ENCODE measurements at regions of chr10 and their contacts with region 1.

Region 1: DNA sequence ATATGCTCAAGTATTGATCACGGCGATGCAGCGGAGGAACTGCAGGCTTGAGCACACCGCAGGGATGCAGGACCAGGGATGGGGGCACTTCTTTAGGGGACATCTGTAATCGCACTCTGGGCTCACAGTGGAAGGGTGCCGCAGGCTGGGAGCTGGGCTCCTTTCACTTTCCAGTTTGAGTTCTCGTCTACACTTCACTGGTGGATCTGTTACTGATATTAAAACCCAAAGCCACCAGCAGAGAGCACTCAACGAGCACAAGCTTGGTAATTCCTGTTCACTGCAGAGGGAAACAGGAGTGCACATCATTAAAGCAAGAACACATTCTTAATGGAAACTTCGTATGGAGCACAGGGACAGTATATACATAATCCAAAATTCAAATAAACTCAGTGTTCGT is 91.3 kb downstream of the PARD3 start:
- DNase-seq: peak; percentile 76
- H3K4me3 ChIP-seq: no peak overlapping the region
- H3K27ac ChIP-seq: no peak overlapping the region
- H3K4me1 ChIP-seq: peaks cover 8% of the 10 kb centered on the region
- H3K27me3 ChIP-seq: no peaks in the 10 kb centered on the region
- CTCF ChIP-seq: peak; percentile 26 to 47
- POLR2A ChIP-seq: no peak

Region 2: DNA sequence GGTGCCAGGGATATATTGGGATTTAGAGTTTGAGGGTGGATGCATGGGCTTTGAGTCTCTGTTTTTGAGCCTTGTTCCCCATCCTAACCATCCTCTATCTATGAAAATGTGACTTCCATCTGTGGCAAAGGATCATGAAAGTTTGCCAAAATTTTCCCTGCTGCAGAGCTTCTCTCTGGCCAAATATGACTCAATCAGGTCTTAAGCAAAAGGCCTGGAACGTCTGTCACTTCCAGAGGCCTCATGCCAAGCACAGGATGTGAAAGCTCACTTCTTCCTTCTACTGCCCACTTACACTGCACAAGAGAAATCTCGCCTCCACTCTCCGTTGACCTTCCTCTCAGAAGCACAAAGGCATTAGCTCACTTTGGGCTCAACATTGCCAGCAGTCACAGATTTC is 692.4 kb before region 1 on chr10:
- CTCF ChIA-PET with region 1: no interaction called
- POLR2A ChIA-PET with region 1: no interaction called
- dilution Hi-C with region 1: no loop called
- intact Hi-C with region 1: no loop called
- DNase-seq: no peak
- H3K4me3 ChIP-seq: no peak overlapping the region
- H3K27ac ChIP-seq: no peak overlapping the region
- H3K4me1 ChIP-seq: no peaks in the 10 kb centered on the region
- H3K27me3 ChIP-seq: no peaks in the 10 kb centered on the region
- CTCF ChIP-seq: no peak
- POLR2A ChIP-seq: no peak

Region 3: GRCh38 chr10:34682580-34682979 is 41.2 kb before region 1 on chr10:
- CTCF ChIA-PET with region 1: interaction called, 11 read pairs
- POLR2A ChIA-PET with region 1: no interaction called
- dilution Hi-C with region 1: no loop called
- intact Hi-C with region 1: no loop called
- DNase-seq: no peak
- H3K4me3 ChIP-seq: no peak overlapping the region
- H3K27ac ChIP-seq: no peak overlapping the region
- H3K4me1 ChIP-seq: no peaks in the 10 kb centered on the region
- H3K27me3 ChIP-seq: no peaks in the 10 kb centered on the region
- CTCF ChIP-seq: no peak
- POLR2A ChIP-seq: no peak

Region 4: GRCh38 chr10:34815185-34816084 is 91.7 kb after region 1 on chr10 and contains the start of gene PARD3:
- CTCF ChIA-PET with region 1: interaction called, 14 read pairs
- POLR2A ChIA-PET with region 1: no interaction called
- dilution Hi-C with region 1: no loop called
- intact Hi-C with region 1: no loop called
- DNase-seq: peak; percentile 54
- H3K4me3 ChIP-seq: peak within 1 kb of the TSS; percentile 53 to 92 (median 65)
- H3K27ac ChIP-seq: peak within 1 kb of the TSS; percentile 50
- H3K4me1 ChIP-seq: peaks cover 14% of the 10 kb centered on the region
- H3K27me3 ChIP-seq: peaks cover 3 to 6% of the 10 kb centered on the region in 2 experiments
- CTCF ChIP-seq: no peak
- POLR2A ChIP-seq: no peak
- total RNA-seq, gene PARD3: 20.2 and 24.1 TPM in 2 replicates

Region 5: DNA sequence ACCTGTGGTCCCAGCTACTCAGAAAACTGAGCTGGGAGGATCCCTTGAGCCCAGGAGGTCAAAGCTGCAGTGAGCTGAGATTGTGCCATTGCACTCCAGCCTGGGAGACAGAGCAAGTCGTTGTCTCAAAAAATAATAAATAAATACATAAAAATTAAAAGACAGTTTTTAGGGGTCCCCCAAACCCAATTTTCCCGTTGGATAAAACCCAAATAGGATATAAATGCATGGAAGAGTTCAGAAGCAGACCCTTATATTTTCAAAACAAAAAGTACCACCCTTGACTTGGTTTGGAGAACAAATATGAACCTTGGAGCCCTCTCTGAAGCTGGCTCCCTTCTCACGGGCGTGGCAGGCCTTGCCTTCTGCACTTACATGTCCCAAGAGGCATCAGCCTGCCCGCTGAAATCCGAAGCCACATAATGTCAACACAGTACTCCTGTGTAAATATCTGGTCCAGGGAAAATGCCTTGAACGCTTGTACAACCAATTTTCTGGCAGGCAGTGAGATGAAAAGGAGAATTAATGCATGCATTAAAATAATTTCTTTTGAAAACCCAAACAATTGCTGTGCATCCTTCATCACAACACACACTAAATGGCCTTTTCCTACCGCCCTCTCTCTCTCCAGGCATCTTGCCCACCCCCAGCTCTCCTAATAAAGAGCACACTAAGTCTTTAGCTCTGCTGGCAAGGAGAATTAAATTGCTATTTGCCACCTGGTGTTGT is 137.7 kb after region 1 on chr10:
- CTCF ChIA-PET with region 1: no interaction called
- POLR2A ChIA-PET with region 1: no interaction called
- dilution Hi-C with region 1: no loop called
- intact Hi-C with region 1: no loop called
- DNase-seq: no peak
- H3K4me3 ChIP-seq: no peak overlapping the region
- H3K27ac ChIP-seq: no peak overlapping the region
- H3K4me1 ChIP-seq: no peaks in the 10 kb centered on the region
- H3K27me3 ChIP-seq: peaks cover 6% of the 10 kb centered on the region in 2 experiments
- CTCF ChIP-seq: no peak
- POLR2A ChIP-seq: no peak

Region 6: DNA sequence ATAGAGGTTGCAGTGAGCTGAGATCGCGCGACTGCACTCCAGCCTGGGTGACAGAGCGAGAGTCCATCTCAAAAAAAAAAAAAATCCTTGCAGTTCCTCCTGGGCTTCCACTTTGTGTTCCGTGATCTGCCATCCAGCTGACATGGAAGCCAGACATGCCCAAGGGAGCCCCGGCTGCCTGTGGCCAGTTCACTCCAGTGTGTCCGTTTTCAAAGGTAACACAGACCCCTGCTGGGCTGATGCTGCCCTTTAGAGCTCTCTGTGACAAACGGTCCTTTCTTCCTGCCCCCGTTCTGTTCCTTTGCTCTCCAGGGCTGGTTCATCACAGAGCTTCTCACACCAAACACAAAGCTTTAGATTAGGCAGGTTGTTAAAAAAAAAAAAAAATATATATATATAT is 235.6 kb after region 1 on chr10:
- CTCF ChIA-PET with region 1: interaction called, 15 read pairs
- POLR2A ChIA-PET with region 1: no interaction called
- dilution Hi-C with region 1: no loop called
- intact Hi-C with region 1: no loop called
- DNase-seq: no peak
- H3K4me3 ChIP-seq: no peak overlapping the region
- H3K27ac ChIP-seq: no peak overlapping the region
- H3K4me1 ChIP-seq: no peaks in the 10 kb centered on the region
- H3K27me3 ChIP-seq: no peaks in the 10 kb centered on the region
- CTCF ChIP-seq: no peak
- POLR2A ChIP-seq: no peak

Region 7: GRCh38 chr10:35172574-35172973 is 448.8 kb after region 1 on chr10:
- CTCF ChIA-PET with region 1: no interaction called
- POLR2A ChIA-PET with region 1: no interaction called
- dilution Hi-C with region 1: no loop called
- intact Hi-C with region 1: no loop called
- DNase-seq: peak; percentile 98
- H3K4me3 ChIP-seq: peak overlapping the region in 1 of 3 experiments; percentile 18
- H3K27ac ChIP-seq: peak overlapping the region; percentile 65
- H3K4me1 ChIP-seq: peaks cover 17% of the 10 kb centered on the region
- H3K27me3 ChIP-seq: no peaks in the 10 kb centered on the region
- CTCF ChIP-seq: no peak
- POLR2A ChIP-seq: no peak